ENCODE measurements at regions of chr9 and their contacts with region 1.

Region 1: DNA sequence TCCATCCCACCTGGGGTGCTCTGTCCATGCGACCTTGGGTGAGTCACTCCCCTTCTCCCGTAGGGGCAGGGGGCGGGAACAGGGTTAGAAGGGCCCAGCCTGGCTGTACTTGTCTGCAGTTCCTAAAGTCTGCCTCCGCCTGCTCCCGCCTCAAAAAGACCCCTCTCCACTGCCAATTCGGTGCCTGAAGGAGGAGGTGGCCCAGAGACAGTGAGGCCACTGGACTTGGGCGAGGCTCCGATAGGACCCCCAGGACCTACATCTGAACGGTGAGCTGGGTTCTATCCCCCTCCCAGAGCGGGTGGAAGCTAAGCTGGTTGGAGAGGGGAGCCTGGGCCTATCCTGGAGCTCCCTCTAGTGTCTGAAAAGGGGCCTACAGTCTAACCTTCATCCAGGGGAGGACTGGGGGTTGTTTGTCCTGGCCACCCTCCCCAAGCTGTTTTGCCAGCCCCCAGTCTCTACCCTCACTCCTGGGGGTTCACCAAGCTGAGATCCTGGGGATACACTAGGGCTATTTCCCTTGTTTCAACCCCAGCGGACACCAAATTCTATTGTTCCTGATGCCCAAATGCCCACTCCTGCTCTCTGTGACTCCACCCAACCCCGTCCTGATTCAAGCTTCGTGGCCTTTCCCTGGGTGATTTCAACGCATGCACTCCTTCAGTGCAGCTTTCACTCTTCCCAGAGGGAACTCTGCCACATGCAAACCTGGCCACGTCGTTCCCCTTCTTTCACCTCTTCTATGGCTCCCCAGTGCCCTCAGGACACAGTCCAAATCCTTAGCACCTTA is 6.1 kb upstream of the CRB2 start:
- DNase-seq: no peak
- ATAC-seq: peak; percentile 79
- H3K4me3 ChIP-seq: no peak overlapping the region
- H3K27ac ChIP-seq: no peak overlapping the region
- H3K4me1 ChIP-seq: no peaks in the 10 kb centered on the region
- H3K27me3 ChIP-seq: no peaks in the 10 kb centered on the region

Region 2: GRCh38 chr9:123081824-123082223 is 268.1 kb before region 1 on chr9:
- intact Hi-C with region 1: loop called (anchors 2 to 5 kb)
- DNase-seq: no peak
- ATAC-seq: peak in 1 of 2 donors; percentile 28
- H3K4me3 ChIP-seq: no peak overlapping the region
- H3K27ac ChIP-seq: no peak overlapping the region
- H3K4me1 ChIP-seq: no peaks in the 10 kb centered on the region
- H3K27me3 ChIP-seq: no peaks in the 10 kb centered on the region

Region 3: GRCh38 chr9:123107639-123108285 is 242.1 kb before region 1 on chr9:
- intact Hi-C with region 1: loop called in 1 of 4 experiments (anchors 5 kb)
- DNase-seq: no peak
- ATAC-seq: no peak
- H3K4me3 ChIP-seq: no peak overlapping the region
- H3K27ac ChIP-seq: no peak overlapping the region
- H3K4me1 ChIP-seq: peaks cover 6% of the 10 kb centered on the region
- H3K27me3 ChIP-seq: no peaks in the 10 kb centered on the region

Region 4: DNA sequence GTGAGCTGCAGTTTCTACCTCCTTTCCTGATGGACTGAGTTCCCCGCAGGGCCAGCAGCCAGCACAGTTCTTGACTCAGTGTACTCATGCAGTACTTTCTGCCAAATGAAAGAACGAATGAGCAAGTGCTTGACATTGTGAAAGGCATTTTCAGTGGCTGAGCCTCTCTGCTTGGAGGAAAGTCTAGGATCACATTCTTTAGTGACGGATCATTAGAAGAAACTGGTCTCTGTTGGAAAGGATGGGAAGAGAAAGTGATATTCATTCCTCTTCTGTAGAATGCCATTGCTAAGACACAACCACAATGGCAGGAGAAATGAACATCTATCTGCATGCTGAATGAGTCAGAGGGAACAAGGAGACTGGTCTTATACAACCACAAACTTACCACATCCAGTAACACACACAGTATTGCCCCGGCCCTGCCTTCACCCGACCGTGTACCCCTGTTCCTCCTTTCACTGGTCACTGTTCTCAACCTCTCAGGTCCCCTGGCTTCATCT is 213.0 kb after region 1 on chr9:
- intact Hi-C with region 1: no loop called
- DNase-seq: no peak
- ATAC-seq: no peak
- H3K4me3 ChIP-seq: no peak overlapping the region
- H3K27ac ChIP-seq: no peak overlapping the region
- H3K4me1 ChIP-seq: no peaks in the 10 kb centered on the region
- H3K27me3 ChIP-seq: no peaks in the 10 kb centered on the region